Left cardiac atrium (tissue), 4 donors: ENCODE measurements at regions of chr21 and their contacts with region 1.

Region 1: GRCh38 chr21:29477941-29478340 is 179.2 kb downstream of the BACH1 start:
- DNase-seq: no peak
- ATAC-seq: peak in 1 of 2 donors; percentile 56

Region 2: DNA sequence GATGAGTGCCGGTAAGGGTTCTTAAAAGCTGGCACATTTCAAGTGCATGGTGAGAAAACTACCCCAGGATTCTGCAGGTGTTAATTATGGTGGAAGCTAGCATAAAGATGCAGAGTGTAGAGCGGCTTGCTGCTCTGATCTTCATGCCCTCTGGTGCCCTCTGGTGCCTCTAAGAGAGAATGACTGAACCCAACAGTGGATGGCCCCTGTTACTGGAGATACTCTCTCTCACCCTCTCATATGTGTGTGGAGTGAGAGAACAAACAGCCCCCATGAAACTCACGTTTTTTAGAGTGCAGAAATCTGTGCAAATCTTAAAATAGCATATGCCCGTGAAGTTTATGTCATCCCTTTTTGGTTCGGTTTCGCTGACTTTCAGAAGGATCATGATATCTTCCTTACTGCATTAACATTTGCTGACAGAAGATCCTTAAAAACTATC is 371.8 kb after region 1 on chr21:
- intact Hi-C with region 1: loop called (anchors 2 to 5 kb)
- DNase-seq: peak; percentile 30
- ATAC-seq: peak; percentile 84 to 92